Activated CD8-positive, alpha-beta memory T cell treated with anti-CD3 and anti-CD28 coated beads, Interleukin-2, amount 10 ng/mL, durations not matched to agents 7 days and 5 days (primary cell): ENCODE measurements at regions of chr1 and their contacts with region 1.

Region 1: DNA sequence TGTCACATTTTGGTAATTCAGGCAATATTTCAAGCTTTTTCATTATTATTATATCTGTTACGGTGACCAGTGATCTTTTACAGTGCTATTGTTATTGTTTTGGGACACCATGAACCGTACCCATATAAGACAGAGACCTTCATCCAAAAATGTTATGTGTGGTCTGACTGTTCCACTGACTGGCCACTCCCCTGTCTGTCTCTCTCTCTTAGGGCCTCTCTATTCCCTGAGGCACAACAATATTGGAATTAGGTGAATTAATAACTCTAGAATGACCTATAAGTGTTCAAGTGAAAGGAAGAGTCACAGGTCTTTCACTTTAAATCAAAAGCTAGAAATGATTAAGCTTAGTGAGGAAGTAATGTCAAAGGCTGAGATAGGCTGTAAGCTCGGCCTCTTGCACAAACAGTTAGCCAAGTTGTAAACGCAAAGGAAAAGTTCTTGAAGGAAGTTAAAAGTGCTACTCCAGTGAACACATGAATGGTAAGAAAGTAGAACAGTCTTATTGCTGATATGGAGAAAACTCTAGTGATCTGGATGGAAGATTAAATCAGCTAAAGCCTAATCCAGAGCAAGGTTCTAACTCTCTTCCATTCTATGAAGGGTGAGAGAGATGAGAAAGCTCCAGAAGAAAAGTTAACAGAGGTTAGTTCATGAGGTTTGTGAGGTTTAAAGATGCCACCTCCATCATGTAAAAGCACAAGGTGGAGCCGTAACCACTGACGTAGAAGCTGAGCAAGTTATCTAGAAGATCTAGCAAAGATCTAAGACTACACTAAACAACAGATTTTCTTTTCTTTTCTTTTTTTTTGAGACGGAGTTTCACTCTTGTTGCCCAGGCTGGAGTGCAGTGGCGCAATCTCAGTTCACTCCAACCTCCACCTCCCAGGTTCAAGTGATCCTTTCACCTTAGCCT is 19.7 kb upstream of the DIPK1A start:
- DNase-seq: peak; percentile 71
- ATAC-seq: peak; percentile 78
- H3K4me3 Mint-ChIP-seq: peak overlapping the region; percentile 62
- H3K27ac Mint-ChIP-seq: peak overlapping the region; percentile 98
- H3K4me1 Mint-ChIP-seq: peaks cover 51% of the 10 kb centered on the region
- H3K27me3 Mint-ChIP-seq: no peaks in the 10 kb centered on the region

Region 2: DNA sequence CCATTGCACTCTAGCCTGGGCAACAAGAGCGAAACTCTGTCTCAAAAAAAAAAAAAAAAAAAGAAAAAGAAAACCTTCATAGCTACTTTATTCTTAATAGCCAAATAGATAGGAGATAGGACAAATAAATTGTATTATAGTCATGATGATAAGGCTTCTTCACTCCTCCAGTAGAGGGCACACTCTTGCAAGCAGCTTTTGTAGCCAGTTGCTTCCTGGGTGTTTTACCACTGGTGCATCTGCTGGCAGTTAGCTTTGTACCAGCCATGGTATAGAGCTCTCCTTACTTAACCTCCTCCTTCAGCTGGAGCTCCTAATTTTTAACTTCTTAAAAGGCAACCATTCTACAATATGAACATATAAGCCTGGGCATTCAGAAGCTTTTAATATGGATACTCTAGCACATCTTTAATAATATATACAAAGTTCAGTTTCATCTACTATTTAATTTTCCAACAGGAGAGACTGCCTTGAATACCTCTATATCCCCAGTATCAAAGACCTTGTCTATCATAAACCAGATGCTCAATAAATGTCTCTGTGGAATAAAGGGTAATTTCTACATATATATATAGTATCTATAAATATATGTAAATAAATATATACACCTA is 231.9 kb before region 1 on chr1:
- CTCF ChIA-PET with region 1: no interaction called
- DNase-seq: peak; percentile 48
- ATAC-seq: peak; percentile 60
- H3K4me3 Mint-ChIP-seq: no peak overlapping the region
- H3K27ac Mint-ChIP-seq: no peak overlapping the region
- H3K4me1 Mint-ChIP-seq: no peaks in the 10 kb centered on the region
- H3K27me3 Mint-ChIP-seq: peaks cover 19% of the 10 kb centered on the region

Region 3: DNA sequence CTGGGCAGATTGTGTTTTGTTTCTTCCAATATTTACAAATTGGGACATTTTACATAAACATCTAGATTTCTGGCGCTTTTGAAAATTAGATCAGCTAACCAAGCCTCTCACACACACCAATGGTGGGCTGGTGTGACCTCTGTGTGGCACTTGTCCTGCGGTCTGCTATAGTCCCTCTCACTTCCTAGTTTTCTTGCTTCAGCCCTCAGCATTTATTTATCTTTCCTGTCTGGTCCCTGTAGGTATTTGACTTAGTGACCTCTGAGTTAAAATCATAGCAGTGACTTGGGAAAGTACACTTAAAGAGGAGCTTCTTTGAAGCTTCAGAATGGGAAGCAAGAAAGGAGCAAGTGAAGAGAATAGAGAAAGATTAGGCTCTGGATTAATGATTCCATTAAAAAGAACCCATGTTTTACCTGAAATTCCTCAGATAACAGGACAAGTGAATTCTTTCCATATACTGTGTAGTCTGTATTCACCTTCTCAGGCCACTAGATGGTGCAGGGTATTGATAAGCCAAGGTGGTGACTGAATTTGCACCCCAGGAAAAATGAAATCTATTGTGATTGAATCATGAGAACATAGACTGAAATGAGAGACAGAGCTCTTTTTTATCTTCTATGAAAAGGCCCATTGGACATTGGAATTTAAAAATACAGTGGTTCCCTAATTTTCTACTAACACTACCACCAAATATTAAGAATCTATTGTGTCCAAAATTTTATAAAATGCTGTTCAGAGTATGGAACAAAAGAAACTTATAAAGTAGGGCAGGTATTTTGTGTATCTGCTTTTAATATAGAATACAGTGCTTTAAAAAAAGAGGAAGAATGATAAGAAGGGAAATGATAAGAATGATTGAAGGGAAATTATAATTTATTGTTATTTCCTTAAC is 12.6 kb before region 1 on chr1:
- CTCF ChIA-PET with region 1: interaction called, 483 read pairs
- DNase-seq: no peak
- ATAC-seq: peak; percentile 74
- H3K4me3 Mint-ChIP-seq: no peak overlapping the region
- H3K27ac Mint-ChIP-seq: no peak overlapping the region
- H3K4me1 Mint-ChIP-seq: peaks cover 21% of the 10 kb centered on the region
- H3K27me3 Mint-ChIP-seq: no peaks in the 10 kb centered on the region